IMR-90 (cell line): ENCODE measurements at regions of chr3 and their contacts with region 1.

Region 1: GRCh38 chr3:10224784-10225665 is 23.2 kb upstream of the TATDN2 start:
- DNase-seq: peak; percentile 66
- ATAC-seq: peak; percentile 81
- H3K4me3 ChIP-seq: no peak overlapping the region
- H3K27ac ChIP-seq: no peak overlapping the region
- H3K4me1 ChIP-seq: peaks cover 8% of the 10 kb centered on the region
- H3K27me3 ChIP-seq: no peaks in the 10 kb centered on the region
- CTCF ChIP-seq: peak; percentile 84
- POLR2A ChIP-seq: no peak
- RAD21 ChIP-seq: peak; percentile 86

Region 2: DNA sequence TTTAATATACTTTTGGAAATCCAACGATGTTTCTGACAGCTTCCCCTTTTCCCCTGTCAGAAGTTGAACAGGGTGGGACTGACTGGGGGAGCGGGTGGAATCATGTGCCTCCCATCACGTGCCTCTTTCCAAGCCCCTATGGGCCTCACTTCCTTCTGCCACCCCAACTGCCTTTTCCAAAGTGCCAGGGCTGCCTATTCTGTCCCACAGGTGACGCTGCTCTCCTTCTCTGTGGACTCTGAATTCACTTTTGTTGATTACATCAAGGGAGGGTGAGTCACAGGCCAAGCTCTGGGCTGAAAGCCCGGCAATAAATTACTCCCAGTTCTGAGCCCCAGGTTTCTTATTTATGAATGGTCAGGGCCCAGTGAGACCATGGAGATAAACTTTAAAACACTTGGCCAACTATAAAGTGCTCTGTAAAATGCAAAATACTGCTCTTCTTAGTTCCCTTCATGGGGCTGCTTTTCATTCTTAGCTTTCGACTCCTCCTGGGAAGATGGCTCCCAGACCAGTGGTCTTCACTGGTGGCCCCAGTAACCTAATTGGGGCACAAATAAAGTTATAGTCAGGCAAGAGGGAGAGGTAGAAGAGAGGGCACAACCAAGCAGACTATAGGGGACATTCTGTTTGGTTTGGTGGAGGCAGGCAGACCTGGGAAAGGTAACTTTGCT is 509.1 kb before region 1 on chr3:
- CTCF ChIA-PET with region 1: no interaction called
- POLR2A ChIA-PET with region 1: no interaction called
- dilution Hi-C with region 1: no loop called
- in situ Hi-C with region 1: no loop called
- intact Hi-C with region 1: loop called (anchors 10 kb)
- DNase-seq: peak; percentile 90
- ATAC-seq: peak; percentile 98
- H3K4me3 ChIP-seq: no peak overlapping the region
- H3K27ac ChIP-seq: no peak overlapping the region
- H3K4me1 ChIP-seq: peaks cover 2% of the 10 kb centered on the region; the same call in 1 of the 2 replicates
- H3K27me3 ChIP-seq: peaks cover 23% of the 10 kb centered on the region
- CTCF ChIP-seq: peak; percentile 97
- POLR2A ChIP-seq: no peak
- RAD21 ChIP-seq: peak; percentile 98

Region 3: DNA sequence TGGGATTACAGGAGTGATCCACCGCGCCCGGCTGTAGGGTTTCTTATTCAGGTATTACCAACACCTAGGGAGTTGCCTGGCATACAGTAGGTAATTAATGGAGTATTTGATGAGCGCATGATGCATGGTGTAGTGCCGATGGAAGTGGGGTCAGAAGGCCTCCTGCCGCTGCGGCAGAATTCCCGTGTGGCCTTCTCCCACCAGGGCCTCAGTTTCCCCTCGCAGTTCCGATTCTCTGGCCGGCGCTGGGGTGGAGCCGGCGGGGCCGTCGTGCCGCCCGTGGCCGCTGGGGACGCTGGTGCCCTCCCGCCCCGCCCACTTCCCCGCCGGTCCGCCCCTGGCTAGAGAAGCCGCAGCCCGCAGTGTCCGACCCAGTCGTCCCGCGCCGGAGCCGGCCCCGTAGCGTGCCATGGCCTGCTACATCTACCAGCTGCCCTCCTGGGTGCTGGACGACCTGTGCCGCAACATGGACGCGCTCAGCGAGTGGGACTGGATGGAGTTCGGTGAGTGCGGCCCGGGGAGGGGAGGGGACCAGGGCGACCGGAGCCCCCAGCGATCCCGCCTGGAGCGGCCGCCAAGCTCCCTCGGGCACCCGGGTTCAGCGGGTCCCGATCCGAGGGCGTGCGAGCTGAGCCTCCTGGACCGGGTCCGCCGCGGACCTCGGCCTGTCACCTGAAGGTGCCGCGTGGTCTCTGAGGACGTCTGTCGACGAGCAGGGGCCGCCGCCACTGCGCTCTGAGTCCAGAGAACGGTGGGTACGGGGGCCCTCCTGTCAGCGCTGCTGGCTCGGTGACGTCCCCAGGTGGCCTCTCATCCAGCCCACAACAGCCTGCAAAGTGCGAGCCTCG is 60.3 kb before region 1 on chr3 and contains the start of gene IRAK2:
- CTCF ChIA-PET with region 1: interaction called, 6 read pairs
- POLR2A ChIA-PET with region 1: no interaction called
- dilution Hi-C with region 1: no loop called
- in situ Hi-C with region 1: no loop called
- intact Hi-C with region 1: loop called (anchors 1 kb)
- DNase-seq: peak; percentile 50
- ATAC-seq: peak; percentile 99
- H3K4me3 ChIP-seq: peak within 1 kb of the TSS; percentile 94
- H3K27ac ChIP-seq: peak within 1 kb of the TSS; percentile 81
- H3K4me1 ChIP-seq: 0 out of 2 replicates have a peak, but pooled peaks cover 2% of the 10 kb centered on the region
- H3K27me3 ChIP-seq: no peaks in the 10 kb centered on the region
- CTCF ChIP-seq: peak; percentile 69
- POLR2A ChIP-seq: peak; percentile 86
- RAD21 ChIP-seq: peak; percentile 38
- total RNA-seq, gene IRAK2: 8.1 and 8.6 TPM in 2 replicates

Region 4: DNA sequence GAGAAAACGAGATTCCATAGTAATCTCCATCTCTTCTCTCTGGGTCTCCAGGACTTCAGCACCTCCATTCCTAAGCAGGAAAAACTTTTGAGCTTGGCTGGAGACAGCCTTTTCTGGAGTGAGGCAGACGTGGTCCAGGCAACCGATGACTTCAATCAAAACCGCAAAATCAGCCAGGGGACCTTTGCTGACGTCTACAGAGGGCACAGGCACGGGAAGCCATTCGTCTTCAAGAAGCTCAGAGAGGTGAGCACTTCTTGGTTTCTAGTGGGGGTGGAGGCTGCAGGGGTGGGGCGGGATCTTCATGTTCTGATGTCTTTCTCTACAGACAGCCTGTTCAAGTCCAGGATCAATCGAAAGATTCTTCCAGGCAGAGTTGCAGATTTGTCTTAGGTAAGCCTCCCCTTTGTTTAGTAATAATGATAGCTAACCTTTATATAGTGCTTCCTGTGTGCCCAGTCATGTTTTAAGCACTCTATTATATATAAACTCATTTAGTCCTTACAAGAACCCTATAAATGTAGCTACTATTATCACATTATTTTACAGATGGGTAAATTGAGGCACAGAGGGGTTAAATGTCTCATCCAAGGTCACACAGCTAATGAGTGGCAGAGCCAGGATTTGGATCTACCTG is 11.8 kb before region 1 on chr3:
- CTCF ChIA-PET with region 1: no interaction called
- POLR2A ChIA-PET with region 1: interaction called, 14 read pairs
- dilution Hi-C with region 1: no loop called
- in situ Hi-C with region 1: no loop called
- intact Hi-C with region 1: no loop called
- DNase-seq: peak; percentile 81
- ATAC-seq: no peak
- H3K4me3 ChIP-seq: no peak overlapping the region
- H3K27ac ChIP-seq: peak overlapping the region; percentile 37; the same call in 1 of the 2 replicates
- H3K4me1 ChIP-seq: no peaks in the 10 kb centered on the region
- H3K27me3 ChIP-seq: no peaks in the 10 kb centered on the region
- CTCF ChIP-seq: no peak
- POLR2A ChIP-seq: no peak
- RAD21 ChIP-seq: no peak